ENCODE measurements at regions of chr15 and their contacts with region 1.

Region 1: DNA sequence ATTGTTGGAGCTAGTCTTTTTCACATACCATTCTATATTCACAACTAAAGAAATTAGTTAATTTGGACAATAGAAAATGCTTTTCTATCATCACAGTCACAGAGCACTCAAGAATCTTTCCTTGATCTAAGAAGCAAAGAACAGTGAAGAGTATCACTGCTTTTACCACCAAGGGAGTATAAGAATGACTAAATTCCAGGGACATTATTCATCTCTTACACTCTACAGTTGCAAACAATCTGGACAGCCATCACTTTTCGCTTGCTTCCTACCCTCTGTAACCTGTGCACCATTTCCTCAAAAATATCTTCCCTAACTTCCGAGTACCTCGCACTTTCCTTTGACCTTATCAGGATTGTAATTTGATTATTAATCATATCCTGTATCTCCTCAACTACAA is 359.5 kb upstream of the TMCO5A start:
- DNase-seq: no peak
- ATAC-seq: no peak
- H3K4me3 ChIP-seq: no peak overlapping the region
- H3K27ac ChIP-seq: no peak overlapping the region
- H3K4me1 ChIP-seq: no peaks in the 10 kb centered on the region
- H3K27me3 ChIP-seq: no peaks in the 10 kb centered on the region
- CTCF ChIP-seq: no peak

Region 2: GRCh38 chr15:35810007-35810406 is 1765.0 kb before region 1 on chr15:
- intact Hi-C with region 1: loop called in 1 of 10 experiments (anchors 5 kb)
- DNase-seq: peak; percentile 5 to 6
- ATAC-seq: peak in 4 of 8 donors; percentile 47 to 69 (median 56)
- H3K4me3 ChIP-seq: no peak overlapping the region
- H3K27ac ChIP-seq: no peak overlapping the region
- H3K4me1 ChIP-seq: peaks cover 0 to 10% (median 0%) of the 10 kb centered on the region in 9 donors
- H3K27me3 ChIP-seq: no peaks in the 10 kb centered on the region
- CTCF ChIP-seq: no peak

Region 3: GRCh38 chr15:37503557-37503956 is 71.4 kb before region 1 on chr15:
- intact Hi-C with region 1: no loop called
- DNase-seq: no peak
- ATAC-seq: no peak
- H3K4me3 ChIP-seq: no peak overlapping the region
- H3K27ac ChIP-seq: no peak overlapping the region
- H3K4me1 ChIP-seq: no peaks in the 10 kb centered on the region
- H3K27me3 ChIP-seq: no peaks in the 10 kb centered on the region
- CTCF ChIP-seq: no peak